ENCODE measurements at regions of chr22 and their contacts with region 1.

Region 1: GRCh38 chr22:17742527-17742902 is 31.8 kb downstream of the BID start:
- DNase-seq: peak; percentile 51 to 65 (median 57)
- H3K4me3 ChIP-seq: no peak overlapping the region
- H3K4me3 Mint-ChIP-seq: no peak overlapping the region
- H3K27ac ChIP-seq: no peak overlapping the region
- H3K27ac Mint-ChIP-seq: peak overlapping the region in 3 of 7 donors; percentile 24 to 62 (median 27)
- H3K4me1 ChIP-seq: no peaks in the 10 kb centered on the region
- H3K4me1 Mint-ChIP-seq: peaks cover 2 to 15% (median 5%) of the 10 kb centered on the region in 4 donors
- H3K27me3 ChIP-seq: no peaks in the 10 kb centered on the region
- H3K27me3 Mint-ChIP-seq: no peaks in the 10 kb centered on the region

Region 2: GRCh38 chr22:17612057-17612456 is 130.5 kb before region 1 on chr22:
- CTCF ChIA-PET with region 1: no interaction called
- POLR2A ChIA-PET with region 1: no interaction called
- intact Hi-C with region 1: no loop called
- DNase-seq: no peak
- H3K4me3 ChIP-seq: no peak overlapping the region
- H3K4me3 Mint-ChIP-seq: no peak overlapping the region
- H3K27ac ChIP-seq: no peak overlapping the region
- H3K27ac Mint-ChIP-seq: peak overlapping the region in 2 of 7 donors; percentile 13 to 36
- H3K4me1 ChIP-seq: no peaks in the 10 kb centered on the region
- H3K4me1 Mint-ChIP-seq: peaks cover 0 to 7% (median 2%) of the 10 kb centered on the region in 4 donors
- H3K27me3 ChIP-seq: no peaks in the 10 kb centered on the region
- H3K27me3 Mint-ChIP-seq: no peaks in the 10 kb centered on the region

Region 3: DNA sequence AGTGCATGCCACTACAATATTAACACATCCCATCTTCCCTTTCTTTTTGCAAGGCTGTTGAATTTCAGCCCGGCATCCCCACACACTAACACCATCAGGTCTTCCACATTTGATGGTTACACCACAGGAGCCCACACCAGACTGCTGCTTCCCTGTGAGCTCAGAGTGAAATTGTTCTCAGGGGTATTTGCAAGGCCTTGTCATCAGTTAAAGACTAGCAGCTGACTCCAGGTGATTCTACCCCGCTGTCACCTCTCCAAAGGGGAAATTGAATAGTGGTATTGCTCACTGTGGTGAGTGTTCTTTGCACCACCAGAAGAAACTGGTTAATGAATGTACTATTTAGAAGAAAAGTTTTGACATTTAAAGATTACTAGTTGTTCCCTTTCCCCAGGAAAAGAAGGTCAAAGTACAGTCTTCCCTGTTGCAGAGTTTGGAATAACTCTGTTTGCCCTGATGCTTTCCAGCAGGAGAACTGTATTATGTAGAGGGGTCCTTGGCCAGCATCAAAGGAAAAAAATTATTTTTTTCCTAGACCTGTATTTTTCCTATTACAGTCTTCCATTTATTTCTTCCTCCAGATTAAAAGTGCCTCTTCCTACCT is 10.2 kb before region 1 on chr22:
- CTCF ChIA-PET with region 1: interaction called, 12 read pairs
- POLR2A ChIA-PET with region 1: no interaction called
- intact Hi-C with region 1: no loop called
- DNase-seq: no peak
- H3K4me3 ChIP-seq: no peak overlapping the region
- H3K4me3 Mint-ChIP-seq: no peak overlapping the region
- H3K27ac ChIP-seq: no peak overlapping the region
- H3K27ac Mint-ChIP-seq: peak overlapping the region in 6 of 7 donors; percentile 43 to 86 (median 62)
- H3K4me1 ChIP-seq: peaks cover 7% of the 10 kb centered on the region
- H3K4me1 Mint-ChIP-seq: peaks cover 10 to 19% (median 14%) of the 10 kb centered on the region in 4 donors
- H3K27me3 ChIP-seq: no peaks in the 10 kb centered on the region
- H3K27me3 Mint-ChIP-seq: no peaks in the 10 kb centered on the region

Region 4: DNA sequence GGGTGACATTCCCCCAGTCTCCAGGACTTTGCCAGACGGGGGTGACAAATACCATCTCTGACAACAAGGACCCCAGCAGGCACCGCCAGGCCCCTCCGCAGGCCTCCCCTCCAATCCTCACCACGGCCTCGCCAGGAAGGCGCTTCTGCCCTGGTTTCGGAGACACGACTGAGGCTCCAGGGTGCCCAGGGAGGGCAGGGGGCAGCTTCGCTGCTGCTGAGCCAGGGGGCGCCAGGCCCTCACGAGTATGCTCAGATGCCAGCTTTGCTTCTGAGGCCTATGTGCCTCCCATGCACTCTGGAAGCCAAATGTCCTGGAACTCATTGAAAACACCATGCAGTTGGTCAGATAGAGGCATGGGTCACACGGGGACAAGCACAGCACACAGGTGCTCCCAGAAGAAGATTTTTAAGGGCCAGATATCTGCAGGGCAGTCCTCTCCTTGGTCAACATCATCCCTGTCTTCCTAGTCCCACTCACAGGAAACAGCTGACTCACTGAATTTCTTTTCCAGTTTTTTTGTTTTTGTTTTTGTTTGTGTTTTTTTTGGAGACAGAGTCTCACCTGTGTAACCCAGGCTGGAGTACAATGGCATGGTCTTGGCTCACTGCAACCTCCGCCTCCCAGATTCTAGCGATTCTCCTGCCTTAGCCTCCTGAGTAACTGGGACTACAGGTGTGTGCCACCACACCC is 11.9 kb after region 1 on chr22:
- CTCF ChIA-PET with region 1: interaction called, 12 read pairs
- POLR2A ChIA-PET with region 1: no interaction called
- intact Hi-C with region 1: no loop called
- DNase-seq: peak in 1 of 5 donors; percentile 16
- H3K4me3 ChIP-seq: no peak overlapping the region
- H3K4me3 Mint-ChIP-seq: no peak overlapping the region
- H3K27ac ChIP-seq: no peak overlapping the region
- H3K27ac Mint-ChIP-seq: peak overlapping the region in 3 of 7 donors; percentile 27 to 67 (median 42)
- H3K4me1 ChIP-seq: no peaks in the 10 kb centered on the region
- H3K4me1 Mint-ChIP-seq: peaks cover 9 to 25% (median 10%) of the 10 kb centered on the region in 4 donors
- H3K27me3 ChIP-seq: no peaks in the 10 kb centered on the region
- H3K27me3 Mint-ChIP-seq: no peaks in the 10 kb centered on the region

Region 5: GRCh38 chr22:17767233-17768065 is 24.9 kb after region 1 on chr22:
- CTCF ChIA-PET with region 1: interaction called, 16 read pairs
- POLR2A ChIA-PET with region 1: no interaction called
- intact Hi-C with region 1: no loop called
- DNase-seq: peak; percentile 66 to 75 (median 67)
- H3K4me3 ChIP-seq: no peak overlapping the region
- H3K4me3 Mint-ChIP-seq: peak overlapping the region; percentile 65 to 91 (median 78)
- H3K27ac ChIP-seq: peak overlapping the region; percentile 42
- H3K27ac Mint-ChIP-seq: peak overlapping the region; percentile 69 to 97 (median 91)
- H3K4me1 ChIP-seq: peaks cover 36% of the 10 kb centered on the region
- H3K4me1 Mint-ChIP-seq: peaks cover 30 to 71% (median 46%) of the 10 kb centered on the region in 4 donors
- H3K27me3 ChIP-seq: no peaks in the 10 kb centered on the region
- H3K27me3 Mint-ChIP-seq: no peaks in the 10 kb centered on the region

Region 6: DNA sequence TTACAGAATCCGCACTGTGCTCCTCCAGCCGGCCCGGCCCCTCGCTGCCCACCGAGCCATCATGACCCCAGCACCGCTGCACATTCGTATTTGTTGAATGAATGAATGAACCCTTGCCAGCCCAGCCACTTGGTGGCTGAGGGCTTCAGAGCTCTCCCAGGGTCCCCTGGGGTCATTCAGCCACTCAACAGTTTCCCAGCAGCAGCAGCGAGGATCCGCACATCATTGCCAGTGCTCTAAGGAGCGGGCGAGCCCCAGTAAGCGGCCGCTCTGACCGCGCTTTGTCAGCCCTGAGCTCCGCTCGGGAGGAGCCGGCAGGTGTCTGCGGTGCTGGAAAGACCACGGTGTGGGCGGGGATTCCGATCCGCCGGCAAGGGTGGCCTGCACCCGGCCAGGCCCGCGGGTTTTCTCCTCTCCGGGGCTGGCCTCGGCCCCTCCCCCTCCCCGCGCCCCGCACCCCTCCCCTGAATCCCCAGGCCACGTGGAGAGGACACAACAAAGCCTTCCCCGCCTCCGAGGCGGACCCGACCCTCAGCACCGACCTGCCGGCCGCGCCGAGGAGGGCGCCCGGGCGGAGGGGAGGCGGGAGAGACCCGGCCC is 31.2 kb after region 1 on chr22:
- CTCF ChIA-PET with region 1: interaction called, 31 read pairs
- POLR2A ChIA-PET with region 1: interaction called, 20 read pairs
- intact Hi-C with region 1: no loop called
- DNase-seq: peak; percentile 57 to 77 (median 60)
- H3K4me3 ChIP-seq: peak overlapping the region; percentile 51 to 61
- H3K4me3 Mint-ChIP-seq: peak overlapping the region; percentile 87 to 96 (median 90)
- H3K27ac ChIP-seq: peak overlapping the region; percentile 57
- H3K27ac Mint-ChIP-seq: peak overlapping the region; percentile 63 to 95 (median 88)
- H3K4me1 ChIP-seq: peaks cover 70% of the 10 kb centered on the region
- H3K4me1 Mint-ChIP-seq: peaks cover 40 to 88% (median 65%) of the 10 kb centered on the region in 4 donors
- H3K27me3 ChIP-seq: no peaks in the 10 kb centered on the region
- H3K27me3 Mint-ChIP-seq: no peaks in the 10 kb centered on the region

Region 7: DNA sequence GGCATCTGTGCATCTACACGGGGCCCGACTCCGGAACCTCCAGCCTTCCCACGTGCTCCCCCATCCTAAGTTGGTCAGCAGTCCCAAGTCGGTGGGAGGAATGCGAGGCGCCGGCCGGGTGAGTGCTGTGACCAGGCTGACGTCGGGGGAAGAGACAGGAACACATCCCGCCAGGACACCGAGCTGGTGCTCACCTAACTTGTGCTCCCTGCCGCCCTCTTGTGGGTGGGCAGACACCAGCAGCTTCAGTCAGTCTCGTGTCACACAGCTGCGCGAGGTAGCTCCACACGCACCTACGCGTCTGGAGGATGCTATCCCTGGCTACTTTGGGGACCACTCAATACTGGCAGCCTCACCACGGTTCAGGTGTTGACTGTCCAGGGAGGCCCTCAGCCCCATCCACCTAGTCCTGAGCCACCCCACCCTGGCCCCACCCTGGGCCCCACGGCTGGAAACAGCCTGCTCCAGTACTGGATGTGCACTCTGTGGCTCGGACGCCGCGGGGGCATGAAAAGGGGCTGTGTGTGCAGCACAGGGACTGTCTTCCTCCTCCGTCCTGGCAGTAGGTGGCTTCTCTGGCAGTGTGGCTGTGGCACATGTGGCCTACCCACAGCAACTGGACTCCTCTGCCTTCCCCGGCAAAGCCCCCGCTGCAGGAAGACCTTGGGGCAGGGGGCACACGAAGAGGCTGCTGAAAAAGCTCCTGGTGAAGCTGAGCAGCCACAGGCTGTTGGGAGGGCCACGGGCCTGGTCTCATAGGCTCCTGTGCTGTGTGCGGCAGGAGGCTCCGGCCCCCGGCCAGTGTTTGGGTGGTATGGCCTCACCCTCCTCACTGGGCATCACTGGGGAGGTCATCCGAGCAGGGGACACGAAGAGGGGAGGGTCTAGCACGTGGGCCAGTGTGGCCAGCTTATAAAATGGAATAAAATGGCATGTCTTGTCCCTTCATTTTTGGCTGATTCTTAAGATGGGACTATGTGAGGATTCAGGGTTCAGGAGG is 43.0 kb after region 1 on chr22:
- CTCF ChIA-PET with region 1: interaction called, 240 read pairs
- POLR2A ChIA-PET with region 1: interaction called, 20 read pairs
- intact Hi-C with region 1: loop called (anchors 1 kb)
- DNase-seq: peak; percentile 56 to 66 (median 65)
- H3K4me3 ChIP-seq: no peak overlapping the region
- H3K4me3 Mint-ChIP-seq: no peak overlapping the region
- H3K27ac ChIP-seq: no peak overlapping the region
- H3K27ac Mint-ChIP-seq: peak overlapping the region in 2 of 7 donors; percentile 43 to 55
- H3K4me1 ChIP-seq: peaks cover 26% of the 10 kb centered on the region
- H3K4me1 Mint-ChIP-seq: peaks cover 7 to 27% (median 12%) of the 10 kb centered on the region in 4 donors
- H3K27me3 ChIP-seq: no peaks in the 10 kb centered on the region
- H3K27me3 Mint-ChIP-seq: no peaks in the 10 kb centered on the region

Region 8: GRCh38 chr22:18057568-18058209 is 315.2 kb after region 1 on chr22:
- CTCF ChIA-PET with region 1: no interaction called
- POLR2A ChIA-PET with region 1: no interaction called
- intact Hi-C with region 1: no loop called
- DNase-seq: no peak
- H3K4me3 ChIP-seq: no peak overlapping the region
- H3K4me3 Mint-ChIP-seq: no peak overlapping the region
- H3K27ac ChIP-seq: no peak overlapping the region
- H3K27ac Mint-ChIP-seq: no peak overlapping the region
- H3K4me1 ChIP-seq: no peaks in the 10 kb centered on the region
- H3K4me1 Mint-ChIP-seq: no peaks in the 10 kb centered on the region
- H3K27me3 ChIP-seq: no peaks in the 10 kb centered on the region
- H3K27me3 Mint-ChIP-seq: peaks cover 7% of the 10 kb centered on the region in 2 donors